HCT116 (cell line): ENCODE measurements at regions of chr1 and their contacts with region 1.

Region 1: GRCh38 chr1:111030590-111030989 is 66.9 kb upstream of the LRIF1 start:
- DNase-seq: peak; percentile 49
- ATAC-seq: peak; percentile 92
- H3K4me3 ChIP-seq: no peak overlapping the region
- H3K27ac ChIP-seq: no peak overlapping the region
- H3K4me1 ChIP-seq: no peaks in the 10 kb centered on the region
- H3K27me3 ChIP-seq: no peaks in the 10 kb centered on the region
- CTCF ChIP-seq: peak; percentile 36 to 97 (median 91); a peak in 5 of 6 replicates
- POLR2A ChIP-seq: no peak
- RAD21 ChIP-seq: peak; percentile 57

Region 2: DNA sequence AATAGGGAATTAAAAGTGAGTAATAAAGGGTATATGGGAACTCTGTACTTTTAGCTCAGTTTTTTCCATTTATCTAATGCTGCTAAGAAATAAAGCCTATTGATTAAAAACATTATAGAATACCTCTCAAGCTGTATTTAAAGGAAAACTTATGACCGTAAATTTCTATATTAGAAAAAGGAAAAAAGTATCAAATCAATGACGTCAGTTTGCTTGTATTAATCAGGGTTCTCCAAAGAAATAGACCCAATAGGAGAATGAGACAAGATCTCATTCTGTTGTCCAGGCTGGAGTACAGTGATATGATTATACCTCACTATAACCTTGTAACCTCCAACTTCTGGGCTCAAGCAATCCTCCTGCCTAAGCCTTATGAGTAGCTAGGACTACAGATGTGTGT is 51.4 kb before region 1 on chr1:
- CTCF ChIA-PET with region 1: no interaction called
- POLR2A ChIA-PET with region 1: no interaction called
- RAD21 ChIA-PET with region 1: no interaction called
- intact Hi-C with region 1: no loop called
- DNase-seq: no peak
- ATAC-seq: no peak
- H3K4me3 ChIP-seq: no peak overlapping the region
- H3K27ac ChIP-seq: no peak overlapping the region
- H3K4me1 ChIP-seq: no peaks in the 10 kb centered on the region
- H3K27me3 ChIP-seq: no peaks in the 10 kb centered on the region
- CTCF ChIP-seq: no peak
- POLR2A ChIP-seq: no peak
- RAD21 ChIP-seq: no peak

Region 3: GRCh38 chr1:110990536-110990935 is 40.1 kb before region 1 on chr1:
- CTCF ChIA-PET with region 1: interaction called, 11 read pairs
- POLR2A ChIA-PET with region 1: no interaction called
- RAD21 ChIA-PET with region 1: no interaction called
- intact Hi-C with region 1: no loop called
- DNase-seq: no peak
- ATAC-seq: no peak
- H3K4me3 ChIP-seq: no peak overlapping the region
- H3K27ac ChIP-seq: no peak overlapping the region
- H3K4me1 ChIP-seq: no peaks in the 10 kb centered on the region
- H3K27me3 ChIP-seq: peaks cover 23% of the 10 kb centered on the region
- CTCF ChIP-seq: no peak
- POLR2A ChIP-seq: no peak
- RAD21 ChIP-seq: no peak

Region 4: DNA sequence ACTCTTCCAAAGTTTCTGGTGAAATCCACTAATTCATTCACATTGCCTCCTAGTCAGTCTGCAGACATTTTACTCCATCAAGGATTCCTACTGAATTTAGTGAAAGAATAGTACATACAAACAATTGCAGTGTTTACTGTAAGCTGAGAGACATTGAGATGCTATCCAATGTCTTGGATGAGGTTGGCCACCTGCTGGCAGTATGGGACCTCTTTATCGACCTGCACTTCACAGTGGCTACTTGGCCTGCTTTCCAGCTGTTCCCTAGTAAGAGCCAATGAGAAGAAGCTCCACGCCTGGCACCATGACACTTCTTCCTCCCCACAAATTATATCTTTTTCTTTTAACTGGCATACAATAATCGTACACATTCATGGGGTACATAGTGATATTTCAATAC is 15.4 kb before region 1 on chr1:
- CTCF ChIA-PET with region 1: interaction called, 23 read pairs
- POLR2A ChIA-PET with region 1: no interaction called
- RAD21 ChIA-PET with region 1: no interaction called
- intact Hi-C with region 1: no loop called
- DNase-seq: no peak
- ATAC-seq: peak; percentile 64
- H3K4me3 ChIP-seq: no peak overlapping the region
- H3K27ac ChIP-seq: no peak overlapping the region
- H3K4me1 ChIP-seq: no peaks in the 10 kb centered on the region
- H3K27me3 ChIP-seq: peaks cover 6% of the 10 kb centered on the region
- CTCF ChIP-seq: no peak; a peak in 1 of 6 replicates
- POLR2A ChIP-seq: no peak
- RAD21 ChIP-seq: peak; percentile 28; the same call in 1 of the 2 replicates

Region 5: DNA sequence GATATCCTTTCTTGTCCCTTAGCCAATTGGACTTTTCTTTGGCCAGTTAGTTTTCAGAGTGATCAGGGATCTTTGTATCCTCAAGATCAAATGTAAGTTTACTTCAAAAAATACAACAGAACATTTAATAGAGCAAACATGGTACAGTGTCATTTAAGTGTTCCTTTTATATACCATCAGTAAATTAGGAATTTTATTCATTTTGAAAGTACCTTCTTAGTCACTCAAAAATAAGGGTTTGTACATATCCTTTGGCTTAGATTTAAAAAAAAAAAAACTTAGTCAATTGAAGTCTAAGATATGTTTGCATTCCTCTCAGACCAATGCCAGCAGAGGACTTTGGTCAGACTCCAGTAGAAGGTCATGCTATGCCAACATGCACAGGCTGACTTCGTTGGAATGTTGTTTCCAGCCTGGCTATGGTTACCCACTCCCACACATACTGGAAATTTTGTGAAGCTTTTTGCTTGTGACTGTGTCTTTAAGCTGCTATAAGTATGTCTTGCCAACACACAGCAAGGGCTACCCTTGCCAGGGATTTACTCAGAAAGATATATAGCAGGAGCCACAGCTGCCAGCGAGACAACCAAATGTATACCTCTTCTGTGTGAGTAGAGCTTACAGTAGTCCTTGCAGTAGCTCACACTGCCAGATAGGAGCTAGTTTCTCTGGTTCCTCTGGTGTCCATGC is 14.6 kb after region 1 on chr1:
- CTCF ChIA-PET with region 1: interaction called, 25 read pairs
- POLR2A ChIA-PET with region 1: no interaction called
- RAD21 ChIA-PET with region 1: no interaction called
- intact Hi-C with region 1: no loop called
- DNase-seq: no peak
- ATAC-seq: no peak
- H3K4me3 ChIP-seq: no peak overlapping the region
- H3K27ac ChIP-seq: no peak overlapping the region
- H3K4me1 ChIP-seq: no peaks in the 10 kb centered on the region
- H3K27me3 ChIP-seq: 0 out of 2 replicates have a peak, but pooled peaks cover 8% of the 10 kb centered on the region
- CTCF ChIP-seq: no peak
- POLR2A ChIP-seq: no peak
- RAD21 ChIP-seq: no peak

Region 6: DNA sequence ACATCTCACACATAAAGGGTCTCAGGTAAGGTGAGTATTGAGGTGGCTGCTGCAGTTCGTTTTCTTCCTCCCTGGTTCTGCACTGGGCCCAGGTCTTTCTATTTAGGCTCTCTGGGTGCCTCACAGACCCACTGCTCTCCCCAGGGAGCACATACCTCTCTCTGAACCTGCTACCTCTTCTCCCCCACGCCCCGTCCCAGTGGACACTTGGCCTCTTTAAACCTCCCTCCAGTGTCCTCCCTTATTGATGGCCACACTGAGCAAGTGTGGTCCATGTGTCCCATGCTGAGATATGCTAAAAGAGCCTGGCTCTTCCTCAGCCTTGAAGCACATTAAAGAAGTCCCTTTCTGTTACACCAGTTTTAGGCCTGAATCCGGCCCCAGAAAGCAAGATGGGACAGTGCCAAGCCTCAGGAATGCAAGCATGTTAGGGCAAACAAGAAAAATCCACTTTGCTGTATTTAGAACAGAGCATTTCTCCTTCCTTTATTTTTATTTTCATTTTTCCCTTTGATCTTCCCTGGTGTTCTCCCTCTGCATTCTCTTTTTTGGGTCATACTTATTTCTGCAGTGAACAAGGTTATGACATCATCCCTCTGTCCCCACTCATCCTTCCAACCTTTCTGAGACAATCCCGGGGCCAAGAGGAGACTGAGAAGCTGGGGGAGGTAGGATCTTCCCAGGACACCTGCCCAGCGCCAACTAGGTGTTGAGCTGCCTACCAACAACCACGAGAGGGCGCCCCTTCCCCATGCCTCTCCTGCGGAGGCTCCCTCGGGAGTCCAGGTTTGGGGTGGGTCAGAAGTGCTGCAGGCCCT is 191.9 kb after region 1 on chr1:
- CTCF ChIA-PET with region 1: no interaction called
- POLR2A ChIA-PET with region 1: no interaction called
- RAD21 ChIA-PET with region 1: no interaction called
- intact Hi-C with region 1: loop called (anchors 10 kb)
- DNase-seq: peak; percentile 70
- ATAC-seq: peak; percentile 100
- H3K4me3 ChIP-seq: no peak overlapping the region
- H3K27ac ChIP-seq: no peak overlapping the region
- H3K4me1 ChIP-seq: peaks cover 3 to 5% of the 10 kb centered on the region in 2 experiments; a peak in 2 of 4 replicates
- H3K27me3 ChIP-seq: no peaks in the 10 kb centered on the region
- CTCF ChIP-seq: peak; percentile 90 to 98 (median 95)
- POLR2A ChIP-seq: no peak
- RAD21 ChIP-seq: peak; percentile 98

Region 7: GRCh38 chr1:111334169-111334568 is 303.6 kb after region 1 on chr1:
- CTCF ChIA-PET with region 1: interaction called, 5 read pairs
- POLR2A ChIA-PET with region 1: no interaction called
- RAD21 ChIA-PET with region 1: no interaction called
- intact Hi-C with region 1: loop called (anchors 2 kb)
- DNase-seq: peak; percentile 21
- ATAC-seq: peak; percentile 90
- H3K4me3 ChIP-seq: no peak overlapping the region
- H3K27ac ChIP-seq: no peak overlapping the region
- H3K4me1 ChIP-seq: no peaks in the 10 kb centered on the region
- H3K27me3 ChIP-seq: no peaks in the 10 kb centered on the region
- CTCF ChIP-seq: peak; percentile 63 to 81 (median 75)
- POLR2A ChIP-seq: no peak
- RAD21 ChIP-seq: peak; percentile 89